Endothelial cell of umbilical vein (primary cell): ENCODE measurements at regions of chr12 and their contacts with region 1.

Region 1: GRCh38 chr12:111313833-111314259 is 55.0 kb downstream of the PHETA1 start:
- DNase-seq: peak; percentile 71
- H3K4me3 ChIP-seq: no peak overlapping the region
- H3K27ac ChIP-seq: no peak overlapping the region
- H3K4me1 ChIP-seq: peaks cover 7% of the 10 kb centered on the region
- H3K27me3 ChIP-seq: no peaks in the 10 kb centered on the region
- CTCF ChIP-seq: peak; percentile 94 to 96
- POLR2A ChIP-seq: no peak

Region 2: DNA sequence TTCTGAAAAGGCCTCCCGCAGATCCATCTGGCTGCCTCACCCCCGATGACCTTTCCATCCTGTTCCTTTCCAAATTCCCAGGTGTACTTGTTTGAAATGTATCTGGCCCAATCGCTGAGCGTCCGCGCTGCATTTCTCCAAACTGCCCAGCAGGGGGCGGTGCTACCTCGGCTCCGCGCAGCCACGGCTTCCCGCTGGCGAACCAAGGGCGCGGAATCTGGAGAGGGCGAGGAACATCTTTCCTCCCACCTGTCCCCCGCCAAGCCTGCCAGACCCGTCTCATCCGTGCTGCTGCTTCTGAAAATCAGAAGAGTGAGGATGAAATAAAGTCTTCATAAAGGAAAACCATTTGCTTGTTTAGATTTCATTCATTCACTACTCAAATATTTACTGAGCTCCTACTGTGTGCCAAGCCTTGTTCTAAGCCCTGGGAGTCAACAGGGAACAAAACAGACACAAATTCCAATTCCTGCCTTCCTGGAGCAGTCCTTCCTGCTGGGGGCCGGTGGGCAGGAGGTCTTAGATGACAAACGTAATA is 376.7 kb before region 1 on chr12:
- CTCF ChIA-PET with region 1: no interaction called
- POLR2A ChIA-PET with region 1: no interaction called
- dilution Hi-C with region 1: no loop called
- intact Hi-C with region 1: loop called (anchors 1 kb)
- DNase-seq: peak; percentile 56
- H3K4me3 ChIP-seq: no peak overlapping the region
- H3K27ac ChIP-seq: no peak overlapping the region
- H3K4me1 ChIP-seq: no peaks in the 10 kb centered on the region
- H3K27me3 ChIP-seq: no peaks in the 10 kb centered on the region
- CTCF ChIP-seq: peak; percentile 94 to 98
- POLR2A ChIP-seq: no peak

Region 3: GRCh38 chr12:111024205-111024801 is 289.5 kb before region 1 on chr12:
- CTCF ChIA-PET with region 1: interaction called, 6 read pairs
- POLR2A ChIA-PET with region 1: no interaction called
- dilution Hi-C with region 1: no loop called
- intact Hi-C with region 1: loop called (anchors 1 kb)
- DNase-seq: peak; percentile 30
- H3K4me3 ChIP-seq: no peak overlapping the region
- H3K27ac ChIP-seq: no peak overlapping the region
- H3K4me1 ChIP-seq: no peaks in the 10 kb centered on the region
- H3K27me3 ChIP-seq: peaks cover 2 to 5% of the 10 kb centered on the region in 2 experiments
- CTCF ChIP-seq: peak; percentile 67 to 84
- POLR2A ChIP-seq: no peak

Region 4: DNA sequence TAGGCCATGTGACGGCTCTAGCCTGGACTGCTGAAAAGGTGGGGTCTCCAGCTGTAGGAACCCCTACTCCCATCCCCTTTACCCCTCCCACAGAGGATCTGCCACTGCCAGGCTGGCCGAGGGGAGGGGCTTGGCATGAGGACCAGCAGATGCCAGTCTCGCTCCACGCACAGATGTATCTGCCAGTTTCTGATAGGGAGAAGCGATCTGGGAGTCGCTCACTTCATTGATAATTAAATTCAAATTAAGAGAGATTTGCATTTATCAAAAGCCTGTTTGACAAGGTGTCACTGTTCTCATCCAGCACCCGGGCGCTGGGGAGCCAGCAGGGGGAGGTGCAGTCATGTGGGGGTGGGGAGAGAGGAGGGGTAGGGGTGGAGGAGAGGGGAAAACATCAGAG is 175.8 kb before region 1 on chr12:
- CTCF ChIA-PET with region 1: no interaction called
- POLR2A ChIA-PET with region 1: no interaction called
- dilution Hi-C with region 1: no loop called
- intact Hi-C with region 1: no loop called
- DNase-seq: no peak
- H3K4me3 ChIP-seq: no peak overlapping the region
- H3K27ac ChIP-seq: no peak overlapping the region
- H3K4me1 ChIP-seq: no peaks in the 10 kb centered on the region
- H3K27me3 ChIP-seq: no peaks in the 10 kb centered on the region
- CTCF ChIP-seq: no peak
- POLR2A ChIP-seq: no peak

Region 5: DNA sequence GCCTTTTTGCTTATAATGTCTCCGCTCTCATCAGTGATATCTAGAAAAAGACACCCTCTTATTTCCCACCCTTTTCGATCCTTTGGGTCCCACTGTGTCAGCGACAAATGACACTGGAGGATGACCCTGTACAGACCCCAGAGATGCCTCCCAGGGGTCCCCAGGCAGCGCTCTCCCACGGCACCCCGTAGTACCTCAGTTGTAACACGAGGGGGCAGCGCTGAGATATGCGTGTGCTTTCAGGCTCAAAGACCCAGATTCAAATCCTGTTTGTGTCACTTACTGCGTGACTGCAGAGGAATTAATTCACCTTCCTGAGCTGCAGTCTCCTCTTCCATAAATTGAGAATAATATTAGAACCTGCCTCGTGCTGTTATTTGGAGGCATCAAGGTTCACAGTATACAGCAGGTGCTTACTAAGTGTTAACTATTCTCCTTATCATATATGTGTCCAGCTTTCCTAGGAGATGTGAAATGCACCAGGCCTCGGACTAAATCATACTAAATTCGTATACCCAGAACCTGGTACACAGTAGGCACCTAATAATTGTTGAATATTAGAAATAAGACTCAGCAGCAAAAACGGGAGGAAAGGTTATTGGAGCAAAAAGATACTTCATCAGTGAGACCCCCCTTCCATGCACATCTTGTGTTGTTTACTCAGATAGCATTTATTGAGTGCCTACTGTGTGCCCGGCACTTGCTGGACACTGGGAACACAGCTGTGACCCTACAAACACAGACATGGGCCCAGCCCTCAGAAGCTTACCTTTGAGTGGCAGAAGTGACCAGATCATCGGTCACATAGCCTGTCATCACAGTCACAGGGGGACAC is 44.9 kb before region 1 on chr12:
- CTCF ChIA-PET with region 1: interaction called, 6 read pairs
- POLR2A ChIA-PET with region 1: no interaction called
- dilution Hi-C with region 1: no loop called
- intact Hi-C with region 1: loop called (anchors 1 kb)
- DNase-seq: no peak
- H3K4me3 ChIP-seq: no peak overlapping the region
- H3K27ac ChIP-seq: no peak overlapping the region
- H3K4me1 ChIP-seq: no peaks in the 10 kb centered on the region
- H3K27me3 ChIP-seq: peaks cover 0 to 5% of the 10 kb centered on the region in 2 experiments
- CTCF ChIP-seq: peak; percentile 50 to 57
- POLR2A ChIP-seq: no peak

Region 6: DNA sequence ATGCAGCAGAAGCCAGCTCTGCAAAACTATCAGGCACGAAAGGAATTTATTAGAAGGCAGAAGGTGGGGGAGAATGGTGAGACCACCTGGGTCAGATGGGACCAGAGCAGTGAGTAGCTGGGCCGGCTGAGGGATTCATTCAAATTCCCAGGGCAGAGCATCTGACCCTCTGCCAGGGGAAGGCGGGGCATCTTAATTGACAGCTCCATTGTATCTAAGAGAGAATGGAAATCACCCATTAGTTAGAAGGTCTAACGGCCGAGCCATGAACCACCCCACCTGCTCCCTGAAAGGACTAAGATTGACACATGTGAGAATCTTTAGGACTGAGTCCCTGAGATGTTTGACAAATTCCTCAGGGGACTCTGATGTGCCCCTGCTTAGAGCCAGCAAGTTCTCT is 28.6 kb before region 1 on chr12:
- CTCF ChIA-PET with region 1: no interaction called
- POLR2A ChIA-PET with region 1: no interaction called
- dilution Hi-C with region 1: no loop called
- intact Hi-C with region 1: no loop called
- DNase-seq: no peak
- H3K4me3 ChIP-seq: no peak overlapping the region
- H3K27ac ChIP-seq: no peak overlapping the region
- H3K4me1 ChIP-seq: no peaks in the 10 kb centered on the region
- H3K27me3 ChIP-seq: peaks cover 0 to 4% of the 10 kb centered on the region in 2 experiments
- CTCF ChIP-seq: no peak
- POLR2A ChIP-seq: no peak

Region 7: DNA sequence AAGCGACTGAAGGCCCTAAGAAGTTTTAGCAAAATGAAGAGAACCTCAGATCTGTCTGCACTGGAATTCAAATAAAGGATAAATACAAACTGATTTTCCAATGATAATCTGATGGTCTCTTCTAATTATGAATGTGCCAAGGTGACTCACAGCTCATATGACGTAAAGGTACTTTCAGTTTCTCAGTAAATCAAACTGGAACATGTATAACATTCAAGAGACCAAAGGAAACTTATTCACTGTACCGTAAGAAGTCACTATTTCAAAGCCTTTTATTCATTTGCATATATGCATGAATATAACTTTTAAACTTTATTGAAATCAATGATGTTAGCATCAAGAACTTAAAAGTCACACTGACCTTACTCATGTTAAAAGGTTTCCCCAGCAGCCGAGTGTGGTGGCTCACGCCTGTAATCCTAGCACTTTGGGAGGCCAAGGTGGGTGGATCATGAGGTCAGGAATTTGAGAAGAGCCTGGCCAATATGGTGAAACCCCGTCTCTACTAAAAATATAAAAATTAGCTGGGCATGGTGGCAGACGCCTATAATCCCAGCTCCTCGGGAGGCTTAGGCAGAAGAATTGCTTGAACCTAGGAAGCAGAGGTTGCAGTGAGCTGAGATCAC is 233.0 kb after region 1 on chr12:
- CTCF ChIA-PET with region 1: no interaction called
- POLR2A ChIA-PET with region 1: no interaction called
- dilution Hi-C with region 1: no loop called
- intact Hi-C with region 1: no loop called
- DNase-seq: no peak
- H3K4me3 ChIP-seq: no peak overlapping the region
- H3K27ac ChIP-seq: no peak overlapping the region
- H3K4me1 ChIP-seq: no peaks in the 10 kb centered on the region
- H3K27me3 ChIP-seq: no peaks in the 10 kb centered on the region
- CTCF ChIP-seq: no peak
- POLR2A ChIP-seq: no peak